ENCODE measurements at regions of chr17 and their contacts with region 1.

Region 1: GRCh38 chr17:17001874-17002520 is 30.1 kb upstream of the TNFRSF13B start:
- DNase-seq: peak; percentile 93
- ATAC-seq: peak; percentile 98
- H3K4me3 ChIP-seq: peak overlapping the region; percentile 47; the same call in 1 of the 2 replicates
- H3K27ac ChIP-seq: no peak overlapping the region
- H3K4me1 ChIP-seq: peaks cover 4% of the 10 kb centered on the region; the same call in 1 of the 2 replicates
- H3K27me3 ChIP-seq: no peaks in the 10 kb centered on the region
- CTCF ChIP-seq: peak; percentile 97

Region 2: GRCh38 chr17:16962818-16963217 is 39.2 kb before region 1 on chr17:
- CTCF ChIA-PET with region 1: no interaction called
- POLR2A ChIA-PET with region 1: no interaction called
- intact Hi-C with region 1: no loop called
- DNase-seq: peak; percentile 59
- ATAC-seq: peak; percentile 59
- H3K4me3 ChIP-seq: no peak overlapping the region
- H3K27ac ChIP-seq: no peak overlapping the region
- H3K4me1 ChIP-seq: 0 out of 2 replicates have a peak, but pooled peaks cover 2% of the 10 kb centered on the region
- H3K27me3 ChIP-seq: no peaks in the 10 kb centered on the region
- CTCF ChIP-seq: peak; percentile 55

Region 3: DNA sequence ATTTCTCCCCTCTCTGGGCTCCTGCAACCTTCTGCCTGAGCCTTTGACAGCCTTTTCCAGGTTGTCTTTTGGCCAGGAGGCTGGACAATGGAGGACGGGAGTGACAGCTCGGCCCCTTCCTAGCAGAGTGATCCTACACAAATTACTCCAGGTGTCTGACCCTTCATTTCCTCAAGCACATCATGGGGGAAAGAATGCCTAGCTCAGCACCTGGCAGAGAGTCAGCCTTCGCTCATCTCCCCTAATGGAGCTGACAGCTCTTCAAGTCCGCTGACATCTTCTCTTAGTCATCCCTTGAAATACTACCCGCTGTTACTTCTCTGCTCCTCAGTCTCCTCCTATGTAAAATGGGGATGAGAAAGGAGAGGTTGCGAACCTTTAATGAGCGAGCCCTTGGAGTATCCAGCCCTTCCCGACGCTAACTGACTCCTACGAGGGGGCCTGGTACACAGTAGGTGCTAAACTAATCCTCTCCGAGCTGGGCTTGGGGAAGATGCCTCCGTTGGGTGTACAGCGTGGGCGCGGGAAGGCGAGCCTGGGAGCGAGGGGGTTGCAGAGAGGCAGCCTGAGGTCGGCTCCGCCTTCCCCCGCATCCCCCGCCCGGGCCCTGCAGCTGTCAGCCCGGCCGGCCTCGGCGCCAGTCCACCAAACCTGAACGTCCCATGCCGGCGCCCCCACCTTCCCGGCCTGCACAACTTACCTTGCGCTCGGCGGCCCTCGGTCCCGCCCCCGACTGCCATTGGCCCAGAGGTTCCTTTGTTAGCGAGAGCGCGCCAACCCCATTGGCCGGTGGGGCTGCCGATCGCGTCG is 39.8 kb after region 1 on chr17:
- CTCF ChIA-PET with region 1: no interaction called
- POLR2A ChIA-PET with region 1: no interaction called
- intact Hi-C with region 1: loop called (anchors 5 kb)
- DNase-seq: peak; percentile 99
- ATAC-seq: peak; percentile 79
- H3K4me3 ChIP-seq: peak overlapping the region; percentile 79
- H3K27ac ChIP-seq: peak overlapping the region; percentile 85
- H3K4me1 ChIP-seq: peaks cover 37% of the 10 kb centered on the region
- H3K27me3 ChIP-seq: no peaks in the 10 kb centered on the region
- CTCF ChIP-seq: no peak

Region 4: DNA sequence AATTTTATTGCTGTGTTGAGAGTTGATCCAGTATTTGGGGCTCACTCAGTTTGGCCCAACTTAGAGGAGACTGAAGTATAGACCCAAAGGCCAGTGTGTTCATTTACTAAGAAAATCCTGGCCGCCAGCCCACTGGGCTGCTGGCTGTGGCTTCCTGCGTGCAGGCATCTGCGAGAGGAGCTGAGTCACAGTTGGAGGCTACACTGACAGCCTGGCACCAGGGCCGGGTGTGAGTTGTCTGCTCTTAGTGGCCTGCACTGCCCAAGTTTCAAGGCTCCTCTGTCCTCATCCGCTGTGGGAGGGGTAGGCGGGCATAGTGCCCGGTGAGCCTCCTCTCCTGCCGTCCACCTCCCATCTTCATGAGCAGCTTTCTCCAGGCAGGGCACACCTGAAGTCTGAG is 150.0 kb after region 1 on chr17:
- CTCF ChIA-PET with region 1: no interaction called
- POLR2A ChIA-PET with region 1: no interaction called
- intact Hi-C with region 1: loop called (anchors 10 kb)
- DNase-seq: peak; percentile 99
- ATAC-seq: peak; percentile 78
- H3K4me3 ChIP-seq: no peak overlapping the region; the same call in 1 of the 2 replicates
- H3K27ac ChIP-seq: peak overlapping the region; percentile 97
- H3K4me1 ChIP-seq: peaks cover 94% of the 10 kb centered on the region
- H3K27me3 ChIP-seq: no peaks in the 10 kb centered on the region
- CTCF ChIP-seq: no peak